B cell (primary cell): ENCODE measurements at regions of chr15 and their contacts with region 1.

Region 1: GRCh38 chr15:45037936-45038335 is 14.9 kb downstream of the SORD start:
- DNase-seq: no peak
- ATAC-seq: no peak
- H3K4me3 ChIP-seq: no peak overlapping the region
- H3K4me3 Mint-ChIP-seq: peak overlapping the region; percentile 12
- H3K27ac ChIP-seq: no peak overlapping the region
- H3K27ac Mint-ChIP-seq: peak overlapping the region; percentile 38
- H3K4me1 ChIP-seq: peaks cover 15 to 20% of the 10 kb centered on the region in 2 donors
- H3K4me1 Mint-ChIP-seq: peaks cover 39% of the 10 kb centered on the region
- H3K27me3 ChIP-seq: no peaks in the 10 kb centered on the region
- H3K27me3 Mint-ChIP-seq: no peaks in the 10 kb centered on the region
- CTCF ChIP-seq: no peak

Region 2: GRCh38 chr15:44584162-44584749 is 453.7 kb before region 1 on chr15:
- CTCF ChIA-PET with region 1: interaction called, 11 read pairs
- POLR2A ChIA-PET with region 1: no interaction called
- intact Hi-C with region 1: no loop called
- DNase-seq: peak; percentile 63
- ATAC-seq: peak; percentile 76
- H3K4me3 ChIP-seq: no peak overlapping the region
- H3K4me3 Mint-ChIP-seq: no peak overlapping the region
- H3K27ac ChIP-seq: peak overlapping the region in 1 of 2 donors; percentile 18
- H3K27ac Mint-ChIP-seq: no peak overlapping the region
- H3K4me1 ChIP-seq: no peaks in the 10 kb centered on the region
- H3K4me1 Mint-ChIP-seq: peaks cover 3% of the 10 kb centered on the region
- H3K27me3 ChIP-seq: no peaks in the 10 kb centered on the region
- H3K27me3 Mint-ChIP-seq: no peaks in the 10 kb centered on the region
- CTCF ChIP-seq: peak; percentile 56

Region 3: DNA sequence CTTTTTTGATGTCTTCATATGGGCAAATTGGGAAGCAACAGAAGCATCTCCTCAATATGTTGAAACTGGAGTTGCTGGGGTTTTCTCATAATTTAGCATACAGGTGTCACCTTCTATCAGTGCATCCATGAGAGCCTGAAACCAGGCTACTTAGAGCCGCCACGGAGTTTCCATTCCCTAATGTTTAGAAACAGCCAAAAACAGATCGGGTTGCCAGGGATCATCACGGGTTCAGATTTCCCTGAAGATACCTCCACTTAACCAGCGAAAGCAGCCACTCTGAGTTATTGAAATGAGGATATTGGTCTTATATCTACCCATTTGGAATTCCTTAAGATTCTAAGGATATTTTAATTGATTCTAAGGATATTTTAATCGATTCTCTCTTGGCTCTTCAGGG is 66.9 kb before region 1 on chr15:
- CTCF ChIA-PET with region 1: interaction called, 34 read pairs
- POLR2A ChIA-PET with region 1: no interaction called
- intact Hi-C with region 1: no loop called
- DNase-seq: no peak
- ATAC-seq: no peak
- H3K4me3 ChIP-seq: no peak overlapping the region
- H3K4me3 Mint-ChIP-seq: no peak overlapping the region
- H3K27ac ChIP-seq: no peak overlapping the region
- H3K27ac Mint-ChIP-seq: no peak overlapping the region
- H3K4me1 ChIP-seq: no peaks in the 10 kb centered on the region
- H3K4me1 Mint-ChIP-seq: no peaks in the 10 kb centered on the region
- H3K27me3 ChIP-seq: no peaks in the 10 kb centered on the region
- H3K27me3 Mint-ChIP-seq: peaks cover 9% of the 10 kb centered on the region
- CTCF ChIP-seq: no peak

Region 4: DNA sequence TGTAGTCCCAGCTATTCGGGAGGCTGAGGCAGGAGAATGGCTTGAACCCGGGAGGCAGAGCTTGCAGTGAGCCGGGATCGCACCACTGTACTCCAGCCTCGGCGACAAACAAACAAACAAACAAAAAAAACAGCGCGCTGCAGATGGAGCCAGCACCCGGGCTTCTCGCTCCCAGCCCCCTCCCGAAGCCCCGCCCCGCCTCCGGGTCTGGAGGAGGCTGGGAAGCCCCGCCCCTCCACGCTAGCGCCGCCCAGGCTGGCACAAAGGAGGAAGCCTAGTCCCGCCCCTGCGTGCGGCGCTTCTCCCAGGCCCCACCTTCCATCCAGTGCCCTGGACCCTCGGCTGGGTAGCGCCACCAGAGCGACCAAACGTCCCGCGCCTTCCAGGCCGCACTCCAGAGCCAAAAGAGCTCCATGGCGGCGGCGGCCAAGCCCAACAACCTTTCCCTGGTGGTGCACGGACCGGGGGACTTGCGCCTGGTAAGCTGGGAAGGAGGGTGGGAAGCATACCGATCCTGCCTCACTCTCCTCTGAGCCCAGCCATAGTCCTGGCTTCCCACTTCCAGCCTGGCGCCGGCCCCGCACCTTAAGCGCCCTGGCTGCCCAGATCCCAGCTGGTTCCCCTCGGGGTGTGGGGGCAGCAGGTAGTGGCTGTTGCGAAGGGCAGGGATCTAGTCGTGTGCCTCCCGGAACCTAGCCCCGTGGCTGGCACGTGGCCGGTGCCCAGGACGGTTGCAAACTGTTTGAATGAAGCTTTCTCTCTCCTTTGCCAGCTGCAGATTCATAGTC is 14.9 kb before region 1 on chr15 and contains the start of gene SORD:
- CTCF ChIA-PET with region 1: interaction called, 20 read pairs
- POLR2A ChIA-PET with region 1: no interaction called
- intact Hi-C with region 1: loop called (anchors 1 kb)
- DNase-seq: peak; percentile 89
- ATAC-seq: peak; percentile 100
- H3K4me3 ChIP-seq: peak within 1 kb of the TSS; percentile 51 to 92 (median 90)
- H3K4me3 Mint-ChIP-seq: peak within 1 kb of the TSS; percentile 92
- H3K27ac ChIP-seq: peak within 1 kb of the TSS; percentile 50 to 72
- H3K27ac Mint-ChIP-seq: peak within 1 kb of the TSS; percentile 78
- H3K4me1 ChIP-seq: peaks cover 12 to 16% of the 10 kb centered on the region in 2 donors
- H3K4me1 Mint-ChIP-seq: peaks cover 28% of the 10 kb centered on the region
- H3K27me3 ChIP-seq: no peaks in the 10 kb centered on the region
- H3K27me3 Mint-ChIP-seq: peaks cover 18% of the 10 kb centered on the region
- CTCF ChIP-seq: no peak
- total RNA-seq, gene SORD: 24.3 and 25.8 TPM in 2 replicates

Region 5: DNA sequence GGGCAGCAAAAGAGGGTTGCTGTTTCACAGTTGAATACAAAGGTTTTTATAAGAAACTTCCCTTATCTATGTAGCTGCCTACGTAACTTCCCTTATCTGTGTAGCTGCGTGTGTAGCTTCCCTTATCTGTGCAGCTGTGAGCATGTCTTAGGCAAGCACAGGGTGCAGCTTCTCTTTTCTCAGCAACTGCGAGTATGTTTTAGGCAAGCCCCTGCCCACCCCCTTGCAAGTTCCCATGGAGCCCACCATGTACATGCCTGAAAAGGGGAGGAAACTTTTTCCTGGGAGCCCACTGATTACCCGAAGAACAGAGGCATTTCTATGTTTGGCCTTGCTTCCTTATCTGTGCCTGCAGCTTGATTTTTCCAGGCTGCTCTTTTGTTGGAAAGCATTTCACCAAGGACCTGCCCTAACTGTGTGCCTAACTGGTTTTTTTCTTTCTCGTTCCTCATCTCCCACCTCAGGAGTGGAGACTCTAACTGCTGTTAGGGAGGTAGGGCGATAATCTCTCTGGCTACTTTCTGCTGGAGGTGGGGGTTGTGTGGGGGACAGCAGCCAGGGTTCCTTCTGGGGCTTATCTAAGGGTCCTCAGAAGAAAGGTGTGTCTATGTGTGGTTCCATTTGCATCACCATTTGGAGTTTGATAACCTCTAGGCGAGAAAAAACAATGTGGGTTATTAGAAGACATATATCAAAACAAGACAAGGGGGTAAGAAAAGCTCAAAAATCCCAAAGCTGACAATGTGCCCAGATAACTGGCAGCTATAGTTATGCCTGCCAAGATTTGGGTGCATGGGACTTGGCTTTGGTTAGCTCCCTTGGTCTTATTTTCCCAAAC is 11.1 kb after region 1 on chr15:
- CTCF ChIA-PET with region 1: interaction called, 52 read pairs
- POLR2A ChIA-PET with region 1: no interaction called
- intact Hi-C with region 1: no loop called
- DNase-seq: peak; percentile 90
- ATAC-seq: peak; percentile 86
- H3K4me3 ChIP-seq: peak overlapping the region; percentile 11 to 62 (median 40)
- H3K4me3 Mint-ChIP-seq: peak overlapping the region; percentile 80
- H3K27ac ChIP-seq: peak overlapping the region; percentile 92 to 95
- H3K27ac Mint-ChIP-seq: peak overlapping the region; percentile 97
- H3K4me1 ChIP-seq: peaks cover 37 to 42% of the 10 kb centered on the region in 2 donors
- H3K4me1 Mint-ChIP-seq: peaks cover 34% of the 10 kb centered on the region
- H3K27me3 ChIP-seq: no peaks in the 10 kb centered on the region
- H3K27me3 Mint-ChIP-seq: no peaks in the 10 kb centered on the region
- CTCF ChIP-seq: no peak

Region 6: GRCh38 chr15:45064386-45064785 is 26.4 kb after region 1 on chr15:
- CTCF ChIA-PET with region 1: no interaction called
- POLR2A ChIA-PET with region 1: no interaction called
- intact Hi-C with region 1: loop called (anchors 1 kb)
- DNase-seq: no peak
- ATAC-seq: no peak
- H3K4me3 ChIP-seq: no peak overlapping the region
- H3K4me3 Mint-ChIP-seq: no peak overlapping the region
- H3K27ac ChIP-seq: no peak overlapping the region
- H3K27ac Mint-ChIP-seq: peak overlapping the region; percentile 15
- H3K4me1 ChIP-seq: peaks cover 4% of the 10 kb centered on the region in 2 donors
- H3K4me1 Mint-ChIP-seq: peaks cover 12% of the 10 kb centered on the region
- H3K27me3 ChIP-seq: no peaks in the 10 kb centered on the region
- H3K27me3 Mint-ChIP-seq: no peaks in the 10 kb centered on the region
- CTCF ChIP-seq: no peak

Region 7: GRCh38 chr15:45118131-45118588 is 80.2 kb after region 1 on chr15:
- CTCF ChIA-PET with region 1: interaction called, 56 read pairs
- POLR2A ChIA-PET with region 1: interaction called, 4 read pairs
- intact Hi-C with region 1: loop called (anchors 1 kb)
- DNase-seq: peak; percentile 92
- ATAC-seq: peak; percentile 98
- H3K4me3 ChIP-seq: peak overlapping the region in 3 of 5 experiments; percentile 36 to 60 (median 44)
- H3K4me3 Mint-ChIP-seq: peak overlapping the region; percentile 80
- H3K27ac ChIP-seq: no peak overlapping the region
- H3K27ac Mint-ChIP-seq: no peak overlapping the region
- H3K4me1 ChIP-seq: peaks cover 38 to 45% of the 10 kb centered on the region in 2 donors
- H3K4me1 Mint-ChIP-seq: peaks cover 36% of the 10 kb centered on the region
- H3K27me3 ChIP-seq: peaks cover 0 to 70% (median 47%) of the 10 kb centered on the region in 4 experiments
- H3K27me3 Mint-ChIP-seq: peaks cover 69% of the 10 kb centered on the region
- CTCF ChIP-seq: peak; percentile 100